GM12878 (cell line): ENCODE measurements at regions of chr13 and their contacts with region 1.

Region 1: DNA sequence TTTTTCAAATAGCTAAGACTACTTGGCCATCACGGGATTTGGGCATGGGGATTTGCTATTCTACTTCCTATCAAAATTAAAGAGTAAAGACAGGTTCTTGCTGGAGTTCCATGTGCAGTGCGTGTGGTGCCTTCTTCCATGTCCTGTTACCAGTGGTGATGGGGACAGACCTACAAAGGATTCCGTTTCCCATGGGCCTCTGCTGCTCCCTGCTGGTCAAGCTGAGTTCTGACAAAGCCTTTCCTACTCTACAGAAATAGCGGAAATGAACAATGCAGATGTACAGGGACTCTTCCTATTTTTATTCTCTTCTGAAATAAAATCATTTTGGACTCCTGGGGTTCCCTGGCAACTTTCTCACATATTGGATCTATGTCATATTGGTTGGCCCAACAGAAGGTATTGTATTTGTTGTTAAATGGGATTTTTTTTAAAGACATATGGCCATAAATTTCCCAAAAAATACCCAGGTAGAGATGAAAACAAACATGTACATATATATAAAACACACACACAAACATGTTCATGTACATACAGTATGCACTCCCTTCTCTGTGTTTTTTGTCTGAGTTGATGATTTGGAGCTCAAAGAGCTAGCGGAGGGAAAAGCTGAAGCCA is 90.5 kb upstream of the SLC15A1 start:
- DNase-seq: peak; percentile 38
- ATAC-seq: peak; percentile 93
- H3K4me3 ChIP-seq: no peak overlapping the region
- H3K27ac ChIP-seq: no peak overlapping the region
- H3K4me1 ChIP-seq: no peaks in the 10 kb centered on the region
- H3K27me3 ChIP-seq: no peaks in the 10 kb centered on the region
- CTCF ChIP-seq: peak; percentile 86 to 95 (median 89)
- EP300 ChIP-seq: no peak
- POLR2A ChIP-seq: no peak
- RAD21 ChIP-seq: peak; percentile 83

Region 2: GRCh38 chr13:98026457-98026857 is 816.5 kb before region 1 on chr13:
- CTCF ChIA-PET with region 1: no interaction called
- POLR2A ChIA-PET with region 1: no interaction called
- RAD21 ChIA-PET with region 1: no interaction called
- SMC1A ChIA-PET with region 1: no interaction called
- in situ Hi-C with region 1: no loop called
- intact Hi-C with region 1: loop called (anchors 5 kb)
- DNase-seq: no peak
- ATAC-seq: no peak
- H3K4me3 ChIP-seq: no peak overlapping the region
- H3K27ac ChIP-seq: no peak overlapping the region
- H3K4me1 ChIP-seq: no peaks in the 10 kb centered on the region
- H3K27me3 ChIP-seq: no peaks in the 10 kb centered on the region
- CTCF ChIP-seq: no peak
- EP300 ChIP-seq: no peak
- POLR2A ChIP-seq: no peak
- RAD21 ChIP-seq: no peak

Region 3: DNA sequence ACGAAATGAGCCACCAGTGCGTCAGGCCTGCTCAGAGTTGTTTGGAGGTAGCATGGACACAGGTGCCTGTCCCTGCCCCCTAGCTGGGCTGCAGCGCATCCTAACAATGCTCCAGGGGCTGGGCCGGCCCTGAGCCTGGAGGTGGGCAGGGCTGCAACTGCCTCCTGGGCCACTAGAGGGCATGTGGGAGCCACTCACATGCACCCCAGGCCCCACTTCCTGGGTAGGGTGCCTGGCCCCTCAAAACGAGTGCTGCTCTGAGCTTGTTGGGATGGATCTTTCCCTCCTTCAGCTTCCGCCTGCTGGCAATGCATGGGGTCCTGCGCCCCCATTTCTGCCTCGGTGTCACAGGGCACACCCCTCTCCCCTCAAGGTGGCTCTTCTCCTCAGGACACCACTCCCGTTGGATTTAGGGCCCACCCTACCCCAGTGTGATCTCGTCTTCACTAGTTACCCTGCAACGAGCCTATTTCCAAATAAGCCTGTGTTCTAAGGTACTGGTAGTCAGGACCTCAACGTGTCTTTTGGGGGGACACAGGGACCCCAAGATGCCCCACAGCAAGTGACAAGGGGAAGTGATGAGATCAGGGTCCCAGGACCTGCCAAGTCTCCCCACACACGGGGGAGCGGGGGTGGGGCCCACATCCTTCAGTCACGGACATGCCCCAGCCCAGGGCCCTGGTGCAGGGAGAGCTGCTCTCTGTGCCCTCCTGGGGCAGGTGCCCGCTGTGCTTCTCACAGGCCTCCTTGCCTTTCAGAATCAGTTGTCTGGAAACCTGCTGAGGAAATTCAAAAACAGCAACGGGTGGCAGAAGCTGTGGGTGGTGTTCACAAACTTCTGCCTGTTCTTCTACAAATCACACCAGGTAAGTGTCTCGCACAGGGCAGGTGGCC is 397.4 kb before region 1 on chr13:
- CTCF ChIA-PET with region 1: interaction called, 8 read pairs
- POLR2A ChIA-PET with region 1: no interaction called
- RAD21 ChIA-PET with region 1: no interaction called
- SMC1A ChIA-PET with region 1: interaction called, 4 read pairs
- in situ Hi-C with region 1: loop called (anchors 10 kb)
- intact Hi-C with region 1: loop called (anchors 2 kb)
- DNase-seq: peak; percentile 17
- ATAC-seq: peak; percentile 97
- H3K4me3 ChIP-seq: no peak overlapping the region
- H3K27ac ChIP-seq: peak overlapping the region; percentile 53
- H3K4me1 ChIP-seq: peaks cover 6% of the 10 kb centered on the region
- H3K27me3 ChIP-seq: no peaks in the 10 kb centered on the region
- CTCF ChIP-seq: peak; percentile 90 to 100 (median 98); a peak in 5 of 6 replicates
- EP300 ChIP-seq: no peak
- POLR2A ChIP-seq: no peak; the same call in 1 of the 2 replicates
- RAD21 ChIP-seq: peak; percentile 93

Region 4: DNA sequence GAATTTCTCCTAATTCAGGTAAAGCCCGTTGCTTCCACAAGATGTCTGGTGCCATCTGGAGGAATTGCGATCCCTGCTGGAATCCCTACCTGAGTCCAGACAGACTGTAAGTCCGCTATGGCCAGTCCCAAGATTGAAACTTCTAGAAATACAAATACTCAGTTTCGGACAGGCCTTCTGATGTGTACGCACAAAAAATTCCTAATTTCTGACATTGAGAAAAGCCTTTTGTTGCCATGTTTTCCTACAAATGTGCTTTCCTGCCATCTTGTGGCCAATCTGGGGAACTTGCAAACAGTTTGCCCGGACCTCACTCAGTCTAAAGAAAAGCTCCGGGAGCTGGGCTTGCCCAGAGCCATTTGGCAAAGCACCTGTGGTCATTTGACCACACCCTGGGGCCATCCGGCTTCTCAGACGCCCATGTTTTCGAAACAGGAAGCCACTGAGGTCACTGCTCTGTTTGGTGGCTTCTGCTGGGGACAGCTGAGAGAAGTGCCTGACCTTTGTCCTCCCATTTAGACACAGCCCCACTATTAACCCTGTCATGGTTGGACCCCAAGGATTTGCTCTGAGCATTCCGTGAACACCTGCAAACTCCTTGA is 169.9 kb before region 1 on chr13:
- CTCF ChIA-PET with region 1: interaction called, 27 read pairs
- POLR2A ChIA-PET with region 1: no interaction called
- RAD21 ChIA-PET with region 1: interaction called, 8 read pairs
- SMC1A ChIA-PET with region 1: interaction called, 3 read pairs
- in situ Hi-C with region 1: no loop called
- intact Hi-C with region 1: loop called (anchors 2 kb)
- DNase-seq: peak; percentile 13
- ATAC-seq: peak; percentile 96
- H3K4me3 ChIP-seq: no peak overlapping the region
- H3K27ac ChIP-seq: no peak overlapping the region
- H3K4me1 ChIP-seq: no peaks in the 10 kb centered on the region
- H3K27me3 ChIP-seq: no peaks in the 10 kb centered on the region; a peak in 1 of 4 replicates
- CTCF ChIP-seq: peak; percentile 85 to 90 (median 86)
- EP300 ChIP-seq: no peak
- POLR2A ChIP-seq: no peak
- RAD21 ChIP-seq: peak; percentile 88

Region 5: DNA sequence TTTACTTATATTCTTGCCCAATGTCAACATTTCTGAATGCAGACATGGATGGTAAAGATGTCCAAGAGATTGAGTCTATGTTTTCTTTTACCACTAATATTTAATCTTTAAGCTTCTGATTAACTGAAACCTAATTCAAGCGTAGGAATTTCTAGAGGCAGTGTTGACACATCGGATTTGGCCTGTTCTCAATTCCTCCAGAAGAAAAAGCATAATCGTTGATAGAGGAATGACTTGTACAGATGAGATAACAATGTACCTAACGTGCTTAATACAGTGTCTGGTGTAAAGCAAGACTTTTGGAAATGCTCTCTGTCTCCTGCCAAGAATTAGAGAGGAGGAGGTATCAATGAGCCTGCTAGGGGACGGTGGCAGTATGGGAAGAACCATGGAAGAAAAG is 125.7 kb before region 1 on chr13:
- CTCF ChIA-PET with region 1: interaction called, 3 read pairs
- POLR2A ChIA-PET with region 1: no interaction called
- RAD21 ChIA-PET with region 1: no interaction called
- SMC1A ChIA-PET with region 1: no interaction called
- in situ Hi-C with region 1: no loop called
- intact Hi-C with region 1: loop called (anchors 10 kb)
- DNase-seq: no peak
- ATAC-seq: no peak
- H3K4me3 ChIP-seq: no peak overlapping the region
- H3K27ac ChIP-seq: no peak overlapping the region
- H3K4me1 ChIP-seq: no peaks in the 10 kb centered on the region
- H3K27me3 ChIP-seq: no peaks in the 10 kb centered on the region
- CTCF ChIP-seq: no peak
- EP300 ChIP-seq: no peak
- POLR2A ChIP-seq: no peak
- RAD21 ChIP-seq: no peak

Region 6: GRCh38 chr13:98731925-98732324 is 111.0 kb before region 1 on chr13:
- CTCF ChIA-PET with region 1: no interaction called
- POLR2A ChIA-PET with region 1: no interaction called
- RAD21 ChIA-PET with region 1: no interaction called
- SMC1A ChIA-PET with region 1: no interaction called
- in situ Hi-C with region 1: no loop called
- intact Hi-C with region 1: no loop called
- DNase-seq: no peak
- ATAC-seq: no peak
- H3K4me3 ChIP-seq: no peak overlapping the region
- H3K27ac ChIP-seq: no peak overlapping the region
- H3K4me1 ChIP-seq: no peaks in the 10 kb centered on the region
- H3K27me3 ChIP-seq: no peaks in the 10 kb centered on the region; a peak in 2 of 4 replicates
- CTCF ChIP-seq: no peak
- EP300 ChIP-seq: no peak
- POLR2A ChIP-seq: no peak
- RAD21 ChIP-seq: no peak

Region 7: GRCh38 chr13:98797456-98797855 is 45.5 kb before region 1 on chr13:
- CTCF ChIA-PET with region 1: interaction called, 25 read pairs
- POLR2A ChIA-PET with region 1: no interaction called
- RAD21 ChIA-PET with region 1: interaction called, 3 read pairs
- SMC1A ChIA-PET with region 1: interaction called, 5 read pairs
- in situ Hi-C with region 1: no loop called
- intact Hi-C with region 1: no loop called
- DNase-seq: no peak
- ATAC-seq: no peak
- H3K4me3 ChIP-seq: no peak overlapping the region
- H3K27ac ChIP-seq: no peak overlapping the region
- H3K4me1 ChIP-seq: no peaks in the 10 kb centered on the region
- H3K27me3 ChIP-seq: no peaks in the 10 kb centered on the region
- CTCF ChIP-seq: no peak
- EP300 ChIP-seq: no peak
- POLR2A ChIP-seq: no peak
- RAD21 ChIP-seq: no peak

Region 8: GRCh38 chr13:98827449-98827848 is 15.5 kb before region 1 on chr13:
- CTCF ChIA-PET with region 1: interaction called, 12 read pairs
- POLR2A ChIA-PET with region 1: no interaction called
- RAD21 ChIA-PET with region 1: interaction called, 4 read pairs
- SMC1A ChIA-PET with region 1: interaction called, 8 read pairs
- in situ Hi-C with region 1: no loop called
- intact Hi-C with region 1: no loop called
- DNase-seq: no peak
- ATAC-seq: no peak
- H3K4me3 ChIP-seq: no peak overlapping the region
- H3K27ac ChIP-seq: no peak overlapping the region
- H3K4me1 ChIP-seq: no peaks in the 10 kb centered on the region
- H3K27me3 ChIP-seq: no peaks in the 10 kb centered on the region
- CTCF ChIP-seq: no peak
- EP300 ChIP-seq: no peak
- POLR2A ChIP-seq: no peak
- RAD21 ChIP-seq: no peak

Region 9: GRCh38 chr13:99075268-99076191 is 232.6 kb after region 1 on chr13:
- CTCF ChIA-PET with region 1: no interaction called
- POLR2A ChIA-PET with region 1: no interaction called
- RAD21 ChIA-PET with region 1: no interaction called
- SMC1A ChIA-PET with region 1: no interaction called
- in situ Hi-C with region 1: no loop called
- intact Hi-C with region 1: no loop called
- DNase-seq: peak; percentile 36
- ATAC-seq: peak; percentile 70
- H3K4me3 ChIP-seq: no peak overlapping the region
- H3K27ac ChIP-seq: peak overlapping the region; percentile 48; the same call in 1 of the 2 replicates
- H3K4me1 ChIP-seq: peaks cover 4% of the 10 kb centered on the region; the same call in 1 of the 2 replicates
- H3K27me3 ChIP-seq: no peaks in the 10 kb centered on the region
- CTCF ChIP-seq: no peak
- EP300 ChIP-seq: no peak
- POLR2A ChIP-seq: no peak
- RAD21 ChIP-seq: no peak